Astrocyte of the spinal cord (primary cell): ENCODE measurements at regions of chr15 and their contacts with region 1.

Region 1: GRCh38 chr15:89750560-89751542 is at the start of gene MESP1:
- DNase-seq: peak; percentile 88
- H3K4me3 ChIP-seq: peak within 1 kb of the TSS; percentile 39
- CTCF ChIP-seq: peak; percentile 68

Region 2: GRCh38 chr15:89874926-89875564 is 124.2 kb after region 1 on chr15:
- in situ Hi-C with region 1: loop called (anchors 25 kb)
- DNase-seq: peak; percentile 68
- H3K4me3 ChIP-seq: no peak overlapping the region
- CTCF ChIP-seq: peak; percentile 98